OCI-LY7 (cell line): ENCODE measurements at regions of chr16 and their contacts with region 1.

Region 1: DNA sequence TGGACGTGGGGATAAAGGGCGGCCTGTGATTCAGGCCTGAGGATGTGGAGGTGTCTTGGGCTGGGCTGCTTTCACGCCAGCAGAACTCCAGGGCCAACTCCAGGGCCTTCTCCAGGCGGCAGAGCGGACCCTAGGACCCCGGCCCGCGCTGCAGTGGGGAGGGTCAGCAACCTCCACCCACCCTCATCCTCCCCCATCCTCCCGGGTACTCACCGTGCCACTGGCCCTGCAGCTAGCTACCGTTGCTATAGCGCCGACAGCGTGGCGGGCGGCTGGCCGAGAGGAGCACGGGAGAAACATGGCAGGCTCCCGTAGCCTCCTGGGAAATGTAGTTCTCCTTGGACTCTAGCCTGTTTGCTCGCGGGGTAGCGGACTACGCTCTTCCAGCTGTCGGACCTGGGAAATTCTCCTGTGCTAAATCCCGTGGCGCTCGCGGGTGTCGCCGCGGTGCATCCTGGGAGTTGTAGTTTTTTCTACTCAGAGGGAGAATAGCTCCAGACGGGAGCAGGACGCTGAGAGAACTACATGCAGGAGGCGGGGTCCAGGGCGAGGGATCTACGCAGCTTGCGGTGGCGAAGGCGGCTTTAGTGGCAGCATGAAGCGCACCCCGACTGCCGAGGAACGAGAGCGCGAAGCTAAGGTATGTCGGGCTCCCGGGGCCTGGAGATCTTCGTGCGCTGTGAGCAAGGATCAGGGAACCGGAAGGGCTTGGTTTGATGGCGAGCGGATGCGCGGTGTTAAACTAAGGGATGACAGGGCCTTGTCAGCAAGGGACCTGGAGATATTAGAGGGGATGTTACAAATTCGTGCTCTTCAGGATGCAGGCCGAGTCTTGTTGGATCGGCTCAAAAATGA is at the starts of genes FTO and RPGRIP1L:
- DNase-seq: peak; percentile 98
- H3K4me3 ChIP-seq: peak within 1 kb of the TSS; percentile 88
- H3K27ac ChIP-seq: no peak within 1 kb of the TSS
- H3K4me1 ChIP-seq: peaks cover 10% of the 10 kb centered on the region
- CTCF ChIP-seq: no peak
- total RNA-seq, gene FTO: 47.9 and 57.1 TPM in 2 replicates
- total RNA-seq, gene RPGRIP1L: 9.4 and 15.4 TPM in 2 replicates

Region 2: GRCh38 chr16:54248863-54249710 is 545.3 kb after region 1 on chr16:
- CTCF ChIA-PET with region 1: no interaction called
- POLR2A ChIA-PET with region 1: interaction called, 10 read pairs
- intact Hi-C with region 1: no loop called
- DNase-seq: no peak
- H3K4me3 ChIP-seq: no peak overlapping the region
- H3K27ac ChIP-seq: no peak overlapping the region
- H3K4me1 ChIP-seq: no peaks in the 10 kb centered on the region
- CTCF ChIP-seq: no peak